ENCODE measurements at regions of chr15 and their contacts with region 1.

Region 1: DNA sequence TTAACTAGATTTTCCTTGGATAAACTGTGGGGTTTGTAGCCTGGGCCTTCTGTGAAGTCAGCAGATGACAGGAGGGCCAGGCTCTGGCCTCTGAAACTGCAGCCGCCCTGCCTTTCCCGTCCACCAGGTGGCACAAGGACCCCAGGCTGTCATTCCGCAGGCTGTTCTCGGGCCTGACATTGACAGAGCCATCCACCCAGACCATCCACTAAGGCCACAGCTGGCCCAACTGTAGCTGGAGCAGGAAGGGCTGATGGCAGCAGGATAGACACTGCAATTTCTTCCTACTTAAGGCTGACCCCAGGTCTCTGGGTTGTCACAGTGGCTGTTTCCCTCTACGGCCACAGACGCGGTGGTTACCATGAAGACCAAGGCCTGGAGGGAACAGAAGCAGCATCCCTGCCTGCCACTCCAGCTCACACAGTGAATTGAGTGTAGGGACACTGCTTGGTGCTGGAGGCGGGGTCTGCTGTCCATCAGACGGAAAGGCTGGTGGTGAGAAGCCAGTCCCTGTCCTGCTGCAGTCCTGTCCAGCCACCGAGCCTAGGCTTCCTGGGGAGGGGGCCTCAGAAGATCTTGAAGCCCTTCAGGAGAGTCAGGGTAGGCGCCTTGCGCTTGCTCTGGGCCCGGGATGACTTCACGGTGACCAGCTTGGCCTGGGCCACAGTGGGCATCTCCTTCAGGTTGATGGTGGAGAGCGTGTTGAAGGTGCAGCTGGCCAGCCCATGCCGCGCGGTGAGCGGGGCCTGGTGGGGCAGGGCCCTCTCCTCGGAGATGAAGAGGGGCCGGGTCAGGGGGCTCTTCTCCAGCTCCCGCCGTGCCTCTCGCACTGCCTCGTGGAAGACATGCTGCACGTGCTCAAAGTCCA is 9.4 kb downstream of the SLC51B start:
- DNase-seq: peak; percentile 75 to 81
- H3K4me3 ChIP-seq: no peak overlapping the region
- H3K27ac ChIP-seq: peak overlapping the region; percentile 65 to 67
- H3K4me1 ChIP-seq: peaks cover 3 to 14% of the 10 kb centered on the region in 2 donors
- H3K27me3 ChIP-seq: no peaks in the 10 kb centered on the region
- CTCF ChIP-seq: peak; percentile 88 to 97 (median 90)
- POLR2A ChIP-seq: peak in 1 of 2 donors; percentile 10

Region 2: GRCh38 chr15:64792282-64792681 is 262.3 kb before region 1 on chr15:
- intact Hi-C with region 1: no loop called
- DNase-seq: no peak
- H3K4me3 ChIP-seq: no peak overlapping the region
- H3K27ac ChIP-seq: no peak overlapping the region
- H3K4me1 ChIP-seq: no peaks in the 10 kb centered on the region
- H3K27me3 ChIP-seq: no peaks in the 10 kb centered on the region
- CTCF ChIP-seq: no peak
- POLR2A ChIP-seq: no peak

Region 3: DNA sequence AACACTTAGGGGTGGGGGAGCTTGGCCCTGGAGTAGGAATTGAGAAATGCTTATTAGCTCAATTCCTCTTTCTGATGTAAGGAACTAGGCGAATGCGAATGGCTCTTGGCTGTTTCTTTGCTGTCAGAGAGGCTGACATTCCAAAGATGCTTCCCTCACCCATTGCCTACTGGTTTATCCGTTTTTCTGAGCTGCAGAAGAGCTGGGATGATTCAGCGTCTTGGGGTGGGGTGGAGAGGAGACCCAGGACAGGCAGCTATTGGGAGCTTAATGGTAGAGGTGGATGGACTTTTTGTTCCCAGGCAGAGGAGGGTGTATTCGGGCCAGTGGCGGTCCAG is 203.1 kb before region 1 on chr15:
- intact Hi-C with region 1: no loop called
- DNase-seq: peak; percentile 47 to 62
- H3K4me3 ChIP-seq: no peak overlapping the region
- H3K27ac ChIP-seq: peak overlapping the region; percentile 55 to 62
- H3K4me1 ChIP-seq: peaks cover 6 to 15% of the 10 kb centered on the region in 2 donors
- H3K27me3 ChIP-seq: no peaks in the 10 kb centered on the region
- CTCF ChIP-seq: no peak
- POLR2A ChIP-seq: peak in 1 of 2 donors; percentile 30

Region 4: DNA sequence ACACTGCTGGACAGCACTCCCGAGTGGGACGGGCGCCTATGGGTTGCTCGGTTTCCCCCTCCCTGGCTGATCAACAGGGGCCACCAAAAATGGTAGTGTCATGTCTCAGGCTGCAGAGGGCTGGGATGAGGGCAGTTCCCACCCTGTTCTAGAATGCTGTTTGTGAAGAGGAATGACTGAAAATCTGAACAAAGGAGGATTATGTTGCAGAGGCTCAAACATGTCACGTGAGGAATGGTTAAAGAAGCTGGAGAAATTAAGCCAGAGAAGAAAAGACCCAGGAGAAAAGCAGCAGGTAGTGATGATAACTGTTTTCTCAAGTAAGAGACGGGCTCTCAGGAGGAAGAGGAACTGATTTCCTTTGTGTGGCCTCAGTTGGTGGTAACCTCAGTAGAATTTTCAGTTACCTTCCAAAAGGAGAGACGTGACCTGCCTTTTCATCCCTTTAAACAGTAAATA is 75.3 kb before region 1 on chr15:
- intact Hi-C with region 1: no loop called
- DNase-seq: no peak
- H3K4me3 ChIP-seq: no peak overlapping the region
- H3K27ac ChIP-seq: no peak overlapping the region
- H3K4me1 ChIP-seq: no peaks in the 10 kb centered on the region
- H3K27me3 ChIP-seq: no peaks in the 10 kb centered on the region
- CTCF ChIP-seq: no peak
- POLR2A ChIP-seq: no peak

Region 5: GRCh38 chr15:65008983-65009382 is 45.6 kb before region 1 on chr15:
- intact Hi-C with region 1: no loop called
- DNase-seq: no peak
- H3K4me3 ChIP-seq: no peak overlapping the region
- H3K27ac ChIP-seq: no peak overlapping the region
- H3K4me1 ChIP-seq: no peaks in the 10 kb centered on the region
- H3K27me3 ChIP-seq: no peaks in the 10 kb centered on the region
- CTCF ChIP-seq: no peak
- POLR2A ChIP-seq: no peak

Region 6: DNA sequence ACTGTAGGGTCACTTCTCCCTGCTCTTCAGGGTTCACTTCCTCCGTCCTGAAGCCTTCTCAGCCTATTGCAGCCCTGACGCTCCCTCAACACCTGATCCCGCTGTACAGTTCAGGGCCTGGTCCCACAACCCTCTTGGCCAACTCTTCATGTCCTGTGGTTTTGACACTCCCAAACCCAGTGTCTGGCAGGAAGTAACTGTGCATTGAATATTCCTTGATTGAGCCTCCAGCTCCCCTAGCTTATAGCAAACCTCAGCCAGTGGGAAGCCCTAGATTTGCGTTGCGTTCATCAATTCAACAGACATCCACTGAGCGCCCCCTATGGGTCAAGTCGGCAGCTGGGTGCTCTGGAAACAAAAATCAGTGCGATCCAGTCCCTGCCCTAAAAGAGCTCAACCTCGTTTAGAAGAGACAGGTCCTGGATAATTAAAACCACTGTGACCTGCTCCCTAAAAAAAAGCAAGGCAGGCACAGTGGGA is 46.9 kb after region 1 on chr15:
- intact Hi-C with region 1: loop called (anchors 5 kb)
- DNase-seq: peak; percentile 75 to 79
- H3K4me3 ChIP-seq: no peak overlapping the region
- H3K27ac ChIP-seq: no peak overlapping the region
- H3K4me1 ChIP-seq: no peaks in the 10 kb centered on the region
- H3K27me3 ChIP-seq: no peaks in the 10 kb centered on the region
- CTCF ChIP-seq: peak; percentile 65 to 77 (median 69)
- POLR2A ChIP-seq: no peak

Measured in uterus (tissue), 4 donors.